ENCODE measurements at regions of chr22 and their contacts with region 1.

Region 1: GRCh38 chr22:33774781-33775180 is 145.5 kb downstream of the LARGE1 start:
- DNase-seq: no peak
- H3K4me3 ChIP-seq: no peak overlapping the region
- H3K27ac ChIP-seq: no peak overlapping the region
- H3K4me1 ChIP-seq: peaks cover 0 to 10% (median 5%) of the 10 kb centered on the region in 4 donors
- H3K27me3 ChIP-seq: no peaks in the 10 kb centered on the region
- CTCF ChIP-seq: no peak
- EP300 ChIP-seq: no peak
- POLR2A ChIP-seq: no peak

Region 2: DNA sequence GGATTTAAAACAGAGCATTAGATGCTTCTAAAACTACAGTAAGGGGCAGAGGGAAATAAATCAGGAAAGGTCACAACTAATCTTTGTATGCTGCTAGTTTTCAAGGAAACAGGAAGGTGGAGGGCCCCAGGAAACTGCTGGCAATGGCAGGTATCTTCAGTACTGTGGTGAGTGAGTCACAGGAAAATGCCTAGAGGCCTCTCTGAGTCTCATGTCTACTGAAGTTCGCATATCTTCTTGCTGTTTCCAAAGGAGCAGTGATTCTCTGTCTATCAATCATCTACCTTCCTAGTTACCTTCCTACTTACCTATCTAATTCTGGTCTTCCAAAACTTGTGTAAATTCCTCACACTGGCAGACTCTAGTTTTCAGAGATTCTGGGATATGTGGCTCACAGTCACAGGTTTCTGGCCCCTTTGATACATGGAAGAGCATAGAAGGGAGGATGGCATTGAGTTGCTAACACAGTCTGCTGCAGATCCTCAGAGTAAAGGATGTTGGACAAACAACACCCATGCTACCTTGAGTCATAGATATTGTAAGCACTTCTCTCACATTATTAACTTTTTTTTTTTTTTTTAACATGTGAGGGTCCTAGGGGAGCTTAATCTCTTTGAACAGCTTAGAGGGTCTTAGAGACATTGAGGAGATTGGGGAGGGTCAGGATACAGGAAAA is 657.8 kb before region 1 on chr22:
- in situ Hi-C with region 1: no loop called
- intact Hi-C with region 1: no loop called
- DNase-seq: no peak
- H3K4me3 ChIP-seq: no peak overlapping the region
- H3K27ac ChIP-seq: no peak overlapping the region
- H3K4me1 ChIP-seq: no peaks in the 10 kb centered on the region
- H3K27me3 ChIP-seq: no peaks in the 10 kb centered on the region
- CTCF ChIP-seq: no peak
- EP300 ChIP-seq: no peak
- POLR2A ChIP-seq: no peak

Region 3: GRCh38 chr22:33687464-33687863 is 87.3 kb before region 1 on chr22:
- in situ Hi-C with region 1: no loop called
- intact Hi-C with region 1: loop called (anchors 10 kb)
- DNase-seq: no peak
- H3K4me3 ChIP-seq: no peak overlapping the region
- H3K27ac ChIP-seq: no peak overlapping the region
- H3K4me1 ChIP-seq: no peaks in the 10 kb centered on the region
- H3K27me3 ChIP-seq: no peaks in the 10 kb centered on the region
- CTCF ChIP-seq: no peak
- EP300 ChIP-seq: no peak
- POLR2A ChIP-seq: no peak

Region 4: DNA sequence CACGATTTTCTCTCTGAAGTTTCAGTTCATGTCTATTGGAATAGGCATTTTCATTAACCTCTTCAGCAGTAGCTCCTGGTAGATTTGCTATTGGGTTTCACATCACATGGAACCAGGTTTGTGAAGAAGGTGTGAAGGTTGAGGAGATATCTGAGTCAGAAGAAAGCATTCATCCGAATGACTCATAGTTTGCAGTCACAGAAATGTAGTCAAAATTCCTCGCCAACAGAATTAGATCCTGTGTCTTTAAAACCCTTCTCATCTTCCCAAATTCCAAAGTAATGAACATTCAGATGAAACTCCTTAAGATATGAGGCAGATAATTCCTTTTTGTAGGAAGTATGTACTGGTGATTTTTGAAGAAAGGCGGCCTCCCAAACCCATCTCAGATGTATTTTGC is 270.5 kb after region 1 on chr22:
- in situ Hi-C with region 1: no loop called
- intact Hi-C with region 1: no loop called
- DNase-seq: no peak
- H3K4me3 ChIP-seq: no peak overlapping the region
- H3K27ac ChIP-seq: no peak overlapping the region
- H3K4me1 ChIP-seq: no peaks in the 10 kb centered on the region
- H3K27me3 ChIP-seq: peaks cover 3% of the 10 kb centered on the region
- CTCF ChIP-seq: no peak
- EP300 ChIP-seq: no peak
- POLR2A ChIP-seq: no peak

Measured in transverse colon (tissue), 4 donors.